ENCODE measurements at regions of chr22 and their contacts with region 1.

Region 1: GRCh38 chr22:42169055-42169469 is 38.5 kb upstream of the CYP2D6 start:
- DNase-seq: peak; percentile 64 to 90 (median 73)
- H3K4me3 ChIP-seq: no peak overlapping the region
- H3K27ac ChIP-seq: no peak overlapping the region
- H3K4me1 ChIP-seq: peaks cover 8 to 22% of the 10 kb centered on the region in 2 donors
- H3K27me3 ChIP-seq: no peaks in the 10 kb centered on the region
- CTCF ChIP-seq: peak; percentile 75 to 99 (median 92)
- POLR2A ChIP-seq: no peak

Region 2: GRCh38 chr22:42114721-42115120 is 54.3 kb before region 1 on chr22:
- intact Hi-C with region 1: no loop called
- DNase-seq: peak in 2 of 7 donors; percentile 28 to 46
- H3K4me3 ChIP-seq: no peak overlapping the region
- H3K27ac ChIP-seq: no peak overlapping the region
- H3K4me1 ChIP-seq: no peaks in the 10 kb centered on the region
- H3K27me3 ChIP-seq: no peaks in the 10 kb centered on the region
- CTCF ChIP-seq: peak in 4 of 6 experiments; percentile 18 to 42 (median 24)
- POLR2A ChIP-seq: no peak

Region 3: GRCh38 chr22:42270512-42271417 is 101.7 kb after region 1 on chr22 and contains the start of gene TCF20:
- intact Hi-C with region 1: loop called in 1 of 2 experiments (anchors 2 kb)
- DNase-seq: peak; percentile 69 to 82 (median 77)
- H3K4me3 ChIP-seq: peak within 1 kb of the TSS; percentile 36 to 99 (median 92)
- H3K27ac ChIP-seq: peak within 1 kb of the TSS; percentile 64 to 92 (median 78)
- H3K4me1 ChIP-seq: peaks cover 0 to 27% of the 10 kb centered on the region in 2 donors
- H3K27me3 ChIP-seq: no peaks in the 10 kb centered on the region
- CTCF ChIP-seq: no peak
- POLR2A ChIP-seq: no peak
- total RNA-seq, gene TCF20: 18.5 to 43.9 (median 28.3) TPM